ENCODE measurements at regions of chr2 and their contacts with region 1.

Region 1: DNA sequence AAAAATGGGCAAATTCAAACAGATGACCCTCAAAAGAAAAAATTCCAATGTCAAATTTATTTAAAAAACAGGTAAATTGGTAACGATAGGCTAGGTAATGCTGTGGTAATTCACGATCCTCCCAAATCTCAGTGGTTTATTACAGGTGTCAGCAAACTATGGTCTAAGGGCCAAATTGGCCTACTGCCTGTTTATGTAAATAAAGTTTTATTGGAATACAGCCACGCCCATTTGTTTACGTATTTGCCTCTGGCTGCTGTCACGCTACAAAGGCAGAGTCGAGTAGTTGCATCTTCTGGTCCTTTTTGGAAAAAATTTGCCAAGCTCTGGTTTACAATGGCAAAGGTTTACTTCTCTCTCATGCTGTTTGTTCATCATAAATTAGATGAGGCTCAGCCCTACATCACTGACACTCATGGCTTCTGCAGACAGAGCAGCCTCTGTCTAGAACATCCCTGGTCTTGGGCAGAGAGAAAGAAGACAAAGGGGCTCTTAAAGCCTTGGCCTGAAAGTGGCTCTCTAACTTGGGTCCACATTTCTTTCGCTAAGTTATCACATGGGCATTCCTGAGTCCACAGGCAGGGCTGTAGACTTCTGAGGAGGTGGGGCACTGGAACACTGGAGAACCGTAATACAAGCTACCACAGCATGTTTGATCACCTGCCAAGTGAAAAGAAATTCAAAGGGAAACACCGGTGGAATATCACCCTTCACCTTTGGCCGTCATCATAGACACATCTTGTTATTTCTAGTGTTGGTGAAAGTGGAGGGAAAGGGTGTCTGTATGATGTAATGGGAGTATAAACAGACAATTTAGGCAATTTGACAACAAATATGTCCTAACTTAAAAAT is 34.8 kb downstream of the SP110 start:
- DNase-seq: no peak
- ATAC-seq: no peak
- H3K4me3 ChIP-seq: no peak overlapping the region
- H3K27ac ChIP-seq: no peak overlapping the region
- H3K4me1 ChIP-seq: no peaks in the 10 kb centered on the region
- H3K27me3 ChIP-seq: no peaks in the 10 kb centered on the region
- CTCF ChIP-seq: no peak
- EP300 ChIP-seq: no peak
- POLR2A ChIP-seq: no peak
- RAD21 ChIP-seq: no peak

Region 2: DNA sequence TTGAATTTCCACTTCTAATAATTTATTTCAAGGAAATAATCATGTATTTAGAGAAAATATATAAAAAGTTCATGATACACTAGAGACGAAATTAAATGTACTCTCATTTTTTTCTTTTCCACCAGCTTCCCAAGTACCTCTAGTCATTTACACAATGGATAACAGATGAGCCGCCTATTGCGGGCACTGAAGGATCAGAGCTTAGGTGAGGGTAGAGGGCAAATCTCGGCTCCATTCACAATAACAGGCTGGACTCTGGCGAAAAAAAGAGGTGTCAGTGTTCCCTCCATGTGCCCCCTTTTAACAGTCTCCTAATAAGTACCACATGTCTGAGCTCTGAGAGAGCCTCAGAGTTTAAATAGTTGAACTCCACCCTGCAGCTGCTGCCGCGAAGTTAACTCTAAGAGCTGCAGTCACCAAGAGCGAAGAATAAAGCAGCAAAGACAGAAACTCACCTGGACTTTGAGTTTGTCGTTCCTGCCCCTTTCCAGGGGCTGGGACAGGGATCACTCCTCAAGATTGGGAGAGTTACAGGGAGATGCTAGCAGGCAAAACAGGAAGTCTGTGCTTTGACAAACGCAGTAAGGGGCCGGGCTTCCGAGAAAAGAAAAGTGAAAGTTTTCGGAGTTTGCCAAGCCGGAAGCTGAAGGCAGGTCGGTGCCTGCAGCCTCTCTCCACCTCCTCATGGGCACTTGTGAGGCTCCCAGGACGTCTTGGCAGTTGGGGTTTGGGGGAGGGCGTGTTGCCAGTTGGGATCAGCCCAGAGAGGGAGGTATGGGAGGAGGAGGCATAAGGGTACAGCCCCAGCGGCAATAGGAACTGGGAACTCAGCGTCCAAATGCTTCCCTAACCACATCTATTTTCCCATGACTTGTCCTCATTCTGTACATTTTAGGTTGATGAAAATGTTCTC is 34.7 kb after region 1 on chr2 and contains the start of gene SP110:
- CTCF ChIA-PET with region 1: no interaction called
- POLR2A ChIA-PET with region 1: no interaction called
- RAD21 ChIA-PET with region 1: no interaction called
- SMC1A ChIA-PET with region 1: interaction called, 3 read pairs
- in situ Hi-C with region 1: no loop called
- intact Hi-C with region 1: loop called (anchors 2 kb)
- DNase-seq: peak; percentile 78
- ATAC-seq: peak; percentile 81
- H3K4me3 ChIP-seq: peak within 1 kb of the TSS; percentile 82
- H3K27ac ChIP-seq: peak within 1 kb of the TSS; percentile 95
- H3K4me1 ChIP-seq: peaks cover 37% of the 10 kb centered on the region
- H3K27me3 ChIP-seq: no peaks in the 10 kb centered on the region
- CTCF ChIP-seq: no peak
- EP300 ChIP-seq: no peak
- POLR2A ChIP-seq: peak; percentile 91
- RAD21 ChIP-seq: no peak
- polyA plus RNA-seq, gene SP110: 97.3 to 103 TPM

Region 3: DNA sequence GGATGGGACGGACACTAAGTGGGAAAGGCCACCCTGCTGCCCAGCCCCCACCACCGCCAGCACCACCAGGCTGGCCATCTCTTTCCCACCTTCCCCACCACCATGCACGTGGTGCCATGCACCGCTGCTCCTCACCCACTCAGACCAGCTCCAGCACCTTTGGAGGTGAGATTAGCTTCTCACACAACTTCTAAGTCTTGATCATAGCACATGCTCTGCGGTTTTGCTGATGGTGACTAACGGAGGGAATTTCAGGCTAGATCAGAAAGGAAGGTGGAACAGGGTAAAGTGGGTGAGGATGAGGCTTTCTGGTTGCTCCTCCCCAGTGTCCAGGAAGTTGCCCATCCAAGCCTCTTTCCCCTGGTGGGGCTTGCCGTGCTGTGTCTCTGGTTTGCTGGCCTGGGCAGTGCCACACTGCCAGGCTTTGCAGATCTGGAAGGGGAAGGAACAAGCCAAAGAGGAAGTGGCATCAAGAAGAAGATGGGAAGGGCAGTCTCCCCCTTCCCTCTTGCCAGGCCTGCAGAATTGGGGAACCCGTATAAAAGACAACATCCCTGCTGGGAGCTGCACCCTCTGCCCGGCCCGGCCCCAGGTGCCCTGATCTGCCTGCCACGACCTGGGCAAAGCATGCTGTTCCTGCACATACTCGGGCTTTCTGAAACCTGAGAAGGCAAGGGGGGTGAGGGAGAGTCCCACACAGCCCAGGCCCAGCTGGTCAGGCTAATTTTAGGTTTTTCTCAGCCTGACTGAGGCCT is 483.4 kb after region 1 on chr2:
- CTCF ChIA-PET with region 1: no interaction called
- POLR2A ChIA-PET with region 1: no interaction called
- RAD21 ChIA-PET with region 1: no interaction called
- SMC1A ChIA-PET with region 1: no interaction called
- in situ Hi-C with region 1: no loop called
- intact Hi-C with region 1: no loop called
- DNase-seq: peak; percentile 88
- ATAC-seq: peak; percentile 70
- H3K4me3 ChIP-seq: no peak overlapping the region
- H3K27ac ChIP-seq: peak overlapping the region; percentile 92
- H3K4me1 ChIP-seq: peaks cover 73% of the 10 kb centered on the region
- H3K27me3 ChIP-seq: no peaks in the 10 kb centered on the region
- CTCF ChIP-seq: no peak
- EP300 ChIP-seq: peak; percentile 90 to 92
- POLR2A ChIP-seq: peak; percentile 41
- RAD21 ChIP-seq: peak; percentile 10; the same call in 1 of the 2 replicates

Region 4: DNA sequence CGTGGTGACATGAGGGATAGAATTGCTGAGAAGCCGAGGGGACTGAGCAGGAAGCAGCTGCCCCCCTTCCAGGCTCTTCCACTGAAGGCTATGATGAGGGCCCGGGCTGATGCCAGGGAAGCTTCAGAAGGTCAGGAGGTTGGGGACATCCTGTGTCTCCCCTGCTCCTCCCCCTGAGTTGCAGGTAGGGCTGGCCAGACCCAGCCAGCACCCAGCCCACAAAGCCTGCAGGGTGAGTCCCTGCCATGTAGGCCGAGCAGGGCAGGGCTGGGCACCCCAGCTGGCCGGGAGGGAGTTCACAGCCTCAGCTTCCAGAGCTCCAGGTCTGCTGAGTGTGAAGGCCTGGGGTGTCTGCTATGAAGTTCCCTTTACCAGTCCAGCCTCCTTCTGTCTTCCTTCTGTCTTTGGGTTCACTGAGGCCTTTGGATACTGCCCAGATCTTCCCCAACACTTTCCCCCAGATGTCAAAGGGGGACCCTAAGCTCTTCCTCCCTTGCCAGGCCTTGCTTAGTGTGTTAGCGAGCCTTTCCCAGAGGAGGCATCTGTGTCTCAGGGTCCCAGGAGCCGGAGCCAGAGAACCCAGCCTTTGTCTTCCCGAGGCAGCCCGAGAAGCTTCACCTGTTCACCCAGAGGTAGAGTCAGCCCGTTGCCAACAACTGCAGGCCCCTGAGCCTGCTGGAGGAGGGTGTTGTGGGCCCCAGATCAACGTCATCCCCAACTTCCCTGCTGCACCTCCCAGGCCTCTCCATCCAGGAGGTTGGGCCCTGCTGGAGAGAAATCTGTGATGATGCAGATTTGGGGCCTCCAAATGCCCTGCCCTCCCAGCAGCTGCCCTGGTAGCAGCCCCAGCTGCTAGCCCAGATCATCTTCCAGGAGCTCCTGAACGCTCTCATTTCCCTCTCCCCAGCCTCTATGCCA is 1282.9 kb after region 1 on chr2:
- CTCF ChIA-PET with region 1: no interaction called
- POLR2A ChIA-PET with region 1: no interaction called
- RAD21 ChIA-PET with region 1: no interaction called
- SMC1A ChIA-PET with region 1: no interaction called
- in situ Hi-C with region 1: no loop called
- intact Hi-C with region 1: no loop called
- DNase-seq: no peak
- ATAC-seq: no peak
- H3K4me3 ChIP-seq: no peak overlapping the region
- H3K27ac ChIP-seq: no peak overlapping the region
- H3K4me1 ChIP-seq: peaks cover 6% of the 10 kb centered on the region
- H3K27me3 ChIP-seq: no peaks in the 10 kb centered on the region
- CTCF ChIP-seq: no peak
- EP300 ChIP-seq: no peak
- POLR2A ChIP-seq: no peak
- RAD21 ChIP-seq: no peak